CD4-positive, alpha-beta memory T cell (primary cell): ENCODE measurements at regions of chr16 and their contacts with region 1.

Region 1: DNA sequence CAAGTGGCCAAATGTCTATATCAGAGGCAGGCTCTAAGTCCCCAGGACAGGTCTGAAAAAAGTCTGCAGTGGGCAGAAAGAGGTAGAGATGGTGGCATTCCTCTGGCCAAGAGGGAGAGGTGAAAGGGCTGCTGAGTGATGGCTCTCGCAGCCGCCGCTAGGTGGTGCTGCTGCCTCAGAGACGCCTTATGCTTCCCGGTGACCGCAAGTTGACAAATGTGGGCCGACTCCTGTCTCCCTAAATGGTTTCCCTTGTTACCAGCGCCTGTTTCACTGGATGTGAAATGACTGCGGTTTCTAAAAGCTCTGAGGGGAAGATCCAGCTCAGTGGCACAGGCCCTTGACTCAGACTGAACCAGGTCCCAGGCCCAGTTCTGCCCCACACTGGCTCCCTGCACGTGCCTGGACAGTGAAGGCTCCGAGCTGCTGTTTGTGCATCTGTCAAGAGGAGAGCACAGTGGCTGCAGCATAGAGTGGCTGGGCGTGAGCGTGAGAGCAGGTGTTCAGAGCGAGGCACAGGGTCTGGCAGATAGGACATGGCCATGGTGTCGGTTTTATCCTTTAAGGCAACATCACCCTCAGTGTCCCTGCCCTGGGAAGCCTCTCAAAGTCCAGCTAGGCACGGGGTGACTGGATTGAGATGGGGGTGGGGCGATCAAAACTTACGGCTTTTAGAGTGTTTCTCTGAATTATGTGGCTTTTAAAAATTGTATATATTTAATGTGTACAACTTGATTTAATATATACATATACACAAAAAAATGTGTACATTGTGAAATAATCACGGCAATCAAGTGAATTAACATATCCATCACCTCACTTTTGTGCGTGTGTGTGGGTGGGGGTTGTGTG is 19.9 kb downstream of the CLEC16A start:
- DNase-seq: peak; percentile 71 to 82 (median 77)
- H3K4me3 ChIP-seq: peak overlapping the region in 1 of 2 donors; percentile 39
- H3K4me3 Mint-ChIP-seq: peak overlapping the region in 7 of 8 donors; percentile 68 to 83 (median 75)
- H3K27ac ChIP-seq: peak overlapping the region; percentile 63
- H3K27ac Mint-ChIP-seq: peak overlapping the region; percentile 88 to 95 (median 92)
- H3K4me1 ChIP-seq: peaks cover 20% of the 10 kb centered on the region
- H3K4me1 Mint-ChIP-seq: peaks cover 21 to 39% (median 26%) of the 10 kb centered on the region in 4 donors
- H3K27me3 ChIP-seq: no peaks in the 10 kb centered on the region
- H3K27me3 Mint-ChIP-seq: no peaks in the 10 kb centered on the region

Region 2: GRCh38 chr16:10949370-10949970 is 14.8 kb before region 1 on chr16:
- CTCF ChIA-PET with region 1: interaction called, 120 read pairs
- POLR2A ChIA-PET with region 1: interaction called, 6 read pairs
- intact Hi-C with region 1: no loop called
- DNase-seq: peak; percentile 34 to 75 (median 53)
- H3K4me3 ChIP-seq: no peak overlapping the region
- H3K4me3 Mint-ChIP-seq: peak overlapping the region in 6 of 8 donors; percentile 6 to 64 (median 52)
- H3K27ac ChIP-seq: no peak overlapping the region
- H3K27ac Mint-ChIP-seq: peak overlapping the region; percentile 32 to 95 (median 86)
- H3K4me1 ChIP-seq: peaks cover 50% of the 10 kb centered on the region
- H3K4me1 Mint-ChIP-seq: peaks cover 32 to 66% (median 49%) of the 10 kb centered on the region in 4 donors
- H3K27me3 ChIP-seq: no peaks in the 10 kb centered on the region
- H3K27me3 Mint-ChIP-seq: no peaks in the 10 kb centered on the region

Region 3: GRCh38 chr16:11297492-11298142 is 333.4 kb after region 1 on chr16:
- CTCF ChIA-PET with region 1: interaction called, 40 read pairs
- POLR2A ChIA-PET with region 1: interaction called, 8 read pairs
- intact Hi-C with region 1: loop called (anchors 2 kb)
- DNase-seq: peak; percentile 59 to 82 (median 62)
- H3K4me3 ChIP-seq: peak overlapping the region in 1 of 2 donors; percentile 29
- H3K4me3 Mint-ChIP-seq: peak overlapping the region; percentile 68 to 86 (median 78)
- H3K27ac ChIP-seq: no peak overlapping the region
- H3K27ac Mint-ChIP-seq: peak overlapping the region; percentile 6 to 74 (median 46)
- H3K4me1 ChIP-seq: peaks cover 16% of the 10 kb centered on the region
- H3K4me1 Mint-ChIP-seq: peaks cover 12 to 16% (median 13%) of the 10 kb centered on the region in 4 donors
- H3K27me3 ChIP-seq: no peaks in the 10 kb centered on the region
- H3K27me3 Mint-ChIP-seq: peaks cover 0 to 2% of the 10 kb centered on the region in 2 donors

Region 4: DNA sequence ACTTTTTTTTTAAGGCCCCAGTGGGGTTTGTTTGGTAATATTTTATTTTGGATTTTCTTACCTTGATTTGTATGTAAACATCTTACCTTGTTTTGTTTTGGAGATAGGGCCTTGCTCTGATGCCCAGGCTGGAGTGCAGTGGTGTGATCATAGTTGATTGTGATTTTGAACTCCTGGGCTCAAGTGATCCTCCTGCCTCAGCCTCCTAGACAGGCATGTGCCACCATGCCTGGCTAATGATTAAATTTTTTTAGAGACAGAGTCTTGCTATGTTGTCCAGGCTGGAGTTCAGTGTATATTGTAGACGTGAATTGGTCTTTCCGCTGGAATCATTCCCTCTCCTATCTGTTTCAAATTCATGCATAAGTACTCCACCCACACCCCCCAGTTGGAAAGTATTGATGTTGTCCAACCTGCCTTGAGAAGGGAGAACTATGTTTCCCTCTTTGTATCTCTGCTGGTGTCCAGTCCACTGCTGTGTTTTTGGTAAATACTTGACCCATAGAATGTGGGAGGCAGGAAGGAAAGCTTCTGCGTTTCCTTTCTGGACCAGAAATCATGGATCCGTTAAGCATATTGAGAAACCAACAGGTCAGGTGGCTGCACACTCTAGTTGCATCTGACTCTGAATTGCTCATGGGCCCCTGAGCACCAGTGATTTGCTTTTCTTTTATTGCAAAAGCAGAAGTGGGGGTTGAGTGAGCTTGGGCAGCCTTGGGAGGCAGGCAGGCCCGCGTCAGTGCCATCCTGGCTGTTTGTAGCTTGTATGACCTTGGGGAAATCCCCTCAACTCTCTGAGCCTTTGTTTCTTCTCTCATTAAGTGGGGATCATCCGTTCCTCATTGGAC is 406.0 kb after region 1 on chr16:
- CTCF ChIA-PET with region 1: interaction called, 33 read pairs
- POLR2A ChIA-PET with region 1: no interaction called
- intact Hi-C with region 1: loop called (anchors 1 kb)
- DNase-seq: no peak
- H3K4me3 ChIP-seq: no peak overlapping the region
- H3K4me3 Mint-ChIP-seq: no peak overlapping the region
- H3K27ac ChIP-seq: no peak overlapping the region
- H3K27ac Mint-ChIP-seq: peak overlapping the region in 2 of 7 donors; percentile 0 to 47
- H3K4me1 ChIP-seq: no peaks in the 10 kb centered on the region
- H3K4me1 Mint-ChIP-seq: peaks cover 1 to 11% (median 6%) of the 10 kb centered on the region in 4 donors
- H3K27me3 ChIP-seq: no peaks in the 10 kb centered on the region
- H3K27me3 Mint-ChIP-seq: no peaks in the 10 kb centered on the region

Region 5: DNA sequence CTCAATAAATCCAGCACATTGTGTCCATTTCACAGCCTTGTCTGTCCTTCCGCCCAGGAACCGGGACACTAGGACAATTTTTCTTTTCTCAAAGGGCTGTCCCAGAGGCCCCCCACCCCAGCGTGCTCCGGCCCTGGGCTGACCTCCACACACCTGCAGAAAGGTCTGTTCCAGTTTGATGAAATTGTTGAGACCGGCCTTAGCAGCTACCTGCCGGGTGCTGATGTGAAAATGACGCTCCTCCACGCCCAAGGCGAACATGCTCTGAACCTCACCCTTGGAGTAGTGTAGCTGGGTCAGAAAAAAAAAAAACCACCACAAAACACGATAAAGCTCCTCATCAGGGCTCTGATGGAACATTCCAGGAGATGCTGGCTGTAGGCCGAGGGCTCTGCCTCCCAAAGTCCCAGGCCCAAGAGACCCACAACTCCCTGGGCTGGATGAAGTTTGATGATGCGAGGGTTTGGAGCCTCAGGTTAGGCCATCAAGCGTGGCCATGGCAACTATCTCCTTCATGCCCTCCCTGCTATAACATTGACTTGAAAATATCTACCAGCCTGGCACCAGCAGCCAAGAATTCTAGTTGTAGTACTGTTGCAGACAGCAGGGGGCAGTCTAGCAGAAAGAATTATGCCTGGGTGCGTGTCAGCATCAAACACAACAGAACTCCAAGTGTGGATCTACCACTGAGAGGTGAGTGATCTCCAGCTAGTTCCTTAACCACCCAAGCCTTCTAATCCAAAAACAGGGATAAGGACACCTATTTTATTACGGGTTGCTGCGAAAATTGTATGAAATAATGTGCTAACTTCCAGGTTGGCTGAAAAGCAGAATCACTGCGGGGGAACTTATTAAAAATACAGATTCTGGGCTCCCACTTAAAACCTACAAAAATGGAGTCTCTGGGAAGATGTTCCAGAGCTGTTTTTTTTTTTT is 443.1 kb after region 1 on chr16:
- CTCF ChIA-PET with region 1: interaction called, 28 read pairs
- POLR2A ChIA-PET with region 1: no interaction called
- intact Hi-C with region 1: loop called (anchors 2 kb)
- DNase-seq: peak; percentile 61 to 75 (median 67)
- H3K4me3 ChIP-seq: no peak overlapping the region
- H3K4me3 Mint-ChIP-seq: peak overlapping the region in 1 of 8 donors; percentile 48
- H3K27ac ChIP-seq: no peak overlapping the region
- H3K27ac Mint-ChIP-seq: peak overlapping the region in 2 of 7 donors; percentile 80 to 84
- H3K4me1 ChIP-seq: no peaks in the 10 kb centered on the region
- H3K4me1 Mint-ChIP-seq: peaks cover 0 to 6% (median 4%) of the 10 kb centered on the region in 4 donors
- H3K27me3 ChIP-seq: no peaks in the 10 kb centered on the region
- H3K27me3 Mint-ChIP-seq: no peaks in the 10 kb centered on the region

Region 6: DNA sequence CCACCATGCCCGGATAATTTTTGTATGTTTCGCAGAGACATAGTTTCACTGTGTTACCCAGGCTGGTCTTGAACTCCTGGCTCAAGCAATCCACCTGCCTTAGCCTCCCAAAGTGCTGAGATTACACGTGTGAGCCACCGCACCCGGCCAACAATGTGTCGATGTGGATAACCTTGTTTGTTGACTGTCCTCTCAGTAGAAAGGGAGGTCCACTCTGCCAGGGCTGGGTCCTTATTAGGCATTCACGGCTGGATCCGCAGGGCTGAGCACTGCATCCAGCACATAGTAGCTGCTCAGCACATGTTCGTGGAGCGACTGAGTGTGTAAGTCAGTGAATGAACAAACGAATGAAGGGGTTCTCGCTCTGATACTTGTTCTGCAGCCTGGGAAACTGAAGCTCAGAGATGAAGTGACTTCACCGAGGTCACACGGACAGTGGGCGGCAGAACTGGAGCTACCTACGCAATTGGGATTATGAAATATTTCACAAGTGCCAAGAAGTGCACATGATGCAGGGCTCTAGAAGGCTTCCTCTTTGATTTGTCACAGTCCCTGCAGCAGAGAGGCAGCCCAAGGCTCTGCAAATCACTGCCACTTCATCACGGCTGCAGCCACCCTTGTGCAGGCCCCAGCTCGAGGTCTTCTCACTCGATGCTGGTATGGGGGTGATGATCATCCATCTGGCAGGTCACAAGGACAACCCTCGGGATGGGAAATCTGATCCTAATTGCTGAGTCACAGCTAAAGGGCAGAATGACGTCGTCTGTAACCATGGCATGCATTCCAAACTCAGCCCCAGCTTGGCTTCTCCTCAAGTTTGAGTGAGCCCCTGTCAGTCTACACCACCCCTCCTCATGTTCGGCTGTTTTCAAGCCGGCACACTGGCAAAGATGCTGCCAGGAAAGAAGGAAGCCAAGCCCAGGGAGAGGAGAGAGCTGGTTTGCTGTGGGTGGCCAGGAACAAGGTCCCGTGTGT is 675.9 kb after region 1 on chr16:
- CTCF ChIA-PET with region 1: no interaction called
- POLR2A ChIA-PET with region 1: no interaction called
- intact Hi-C with region 1: loop called (anchors 1 kb)
- DNase-seq: no peak
- H3K4me3 ChIP-seq: no peak overlapping the region
- H3K4me3 Mint-ChIP-seq: no peak overlapping the region
- H3K27ac ChIP-seq: no peak overlapping the region
- H3K27ac Mint-ChIP-seq: peak overlapping the region in 1 of 7 donors; percentile 47
- H3K4me1 ChIP-seq: peaks cover 14% of the 10 kb centered on the region
- H3K4me1 Mint-ChIP-seq: peaks cover 5 to 15% (median 12%) of the 10 kb centered on the region in 4 donors
- H3K27me3 ChIP-seq: no peaks in the 10 kb centered on the region
- H3K27me3 Mint-ChIP-seq: no peaks in the 10 kb centered on the region

Region 7: DNA sequence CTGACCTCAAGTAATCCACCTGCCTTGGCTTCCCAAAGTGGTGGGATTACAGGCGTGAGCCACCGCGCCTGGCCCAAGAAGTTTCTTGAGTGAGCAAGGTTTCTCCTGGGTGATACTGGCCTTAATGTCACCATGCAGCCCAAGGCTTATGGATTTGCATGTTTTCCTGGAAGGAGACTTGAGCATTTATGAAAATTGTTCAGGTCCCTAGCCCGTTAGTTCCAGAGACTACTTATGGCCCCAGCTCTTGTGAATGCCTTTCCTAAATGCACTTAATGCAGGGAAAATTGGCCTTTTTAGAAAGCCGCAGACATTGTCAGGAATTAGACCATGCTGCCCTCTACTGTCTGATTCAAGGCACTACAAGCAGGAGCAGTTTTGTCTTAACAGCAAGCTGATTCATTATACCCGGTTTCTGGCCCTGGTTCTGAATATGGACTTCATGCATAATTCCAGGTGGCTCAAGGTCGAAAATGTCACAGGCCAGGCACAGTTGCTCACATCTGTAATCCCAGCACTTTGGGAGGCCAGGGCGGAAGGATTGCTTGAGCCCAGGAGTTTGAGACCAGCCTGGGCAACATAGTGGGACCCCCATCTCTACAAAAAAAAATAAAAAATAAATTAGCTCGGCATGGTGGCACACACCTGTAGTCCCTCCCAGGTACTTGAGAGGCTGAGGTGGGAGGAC is 1103.6 kb after region 1 on chr16:
- CTCF ChIA-PET with region 1: interaction called, 6 read pairs
- POLR2A ChIA-PET with region 1: no interaction called
- intact Hi-C with region 1: loop called (anchors 5 kb)
- DNase-seq: peak; percentile 62 to 67 (median 66)
- H3K4me3 ChIP-seq: no peak overlapping the region
- H3K4me3 Mint-ChIP-seq: no peak overlapping the region
- H3K27ac ChIP-seq: no peak overlapping the region
- H3K27ac Mint-ChIP-seq: peak overlapping the region in 3 of 7 donors; percentile 14 to 70 (median 29)
- H3K4me1 ChIP-seq: no peaks in the 10 kb centered on the region
- H3K4me1 Mint-ChIP-seq: peaks cover 4 to 6% (median 5%) of the 10 kb centered on the region in 4 donors
- H3K27me3 ChIP-seq: no peaks in the 10 kb centered on the region
- H3K27me3 Mint-ChIP-seq: no peaks in the 10 kb centered on the region